ENCODE measurements at regions of chr14 and their contacts with region 1.

Region 1: GRCh38 chr14:65565948-65566347 is 153.4 kb downstream of the FUT8 start:
- DNase-seq: no peak
- H3K4me3 ChIP-seq: no peak overlapping the region
- H3K27ac ChIP-seq: no peak overlapping the region
- H3K4me1 ChIP-seq: no peaks in the 10 kb centered on the region
- H3K27me3 ChIP-seq: no peaks in the 10 kb centered on the region
- CTCF ChIP-seq: no peak

Region 2: DNA sequence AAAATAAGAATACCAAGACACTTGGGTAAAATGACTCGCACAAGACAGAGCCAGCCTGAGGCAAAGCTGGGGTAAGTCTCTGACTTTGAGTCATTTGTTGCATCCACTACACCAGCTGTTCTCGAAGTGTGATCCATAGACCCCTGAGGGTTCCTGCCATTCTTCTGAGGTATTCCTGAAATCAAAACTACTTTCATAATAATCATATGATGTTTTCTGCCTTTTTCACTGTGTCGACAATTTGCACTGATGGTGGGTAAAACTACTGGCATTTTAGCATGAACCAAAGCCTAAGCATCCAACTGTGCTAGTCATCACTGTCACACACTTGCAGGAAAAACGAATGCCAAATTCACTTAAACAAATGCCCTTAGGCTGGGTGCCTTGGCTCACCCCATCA is 288.9 kb before region 1 on chr14:
- CTCF ChIA-PET with region 1: no interaction called
- POLR2A ChIA-PET with region 1: no interaction called
- intact Hi-C with region 1: no loop called
- DNase-seq: peak in 1 of 2 experiments; percentile 71
- H3K4me3 ChIP-seq: no peak overlapping the region
- H3K27ac ChIP-seq: 0 out of 2 replicates have a peak overlapping the region, but pooled peaks have one; percentile 9
- H3K4me1 ChIP-seq: peaks cover 39% of the 10 kb centered on the region
- H3K27me3 ChIP-seq: no peaks in the 10 kb centered on the region
- CTCF ChIP-seq: no peak

Region 3: GRCh38 chr14:65478596-65478995 is 87.4 kb before region 1 on chr14:
- CTCF ChIA-PET with region 1: interaction called, 19 read pairs
- POLR2A ChIA-PET with region 1: no interaction called
- intact Hi-C with region 1: no loop called
- DNase-seq: no peak
- H3K4me3 ChIP-seq: no peak overlapping the region
- H3K27ac ChIP-seq: peak overlapping the region; percentile 16; the same call in 1 of the 2 replicates
- H3K4me1 ChIP-seq: peaks cover 19% of the 10 kb centered on the region
- H3K27me3 ChIP-seq: no peaks in the 10 kb centered on the region
- CTCF ChIP-seq: no peak